A673 (cell line): ENCODE measurements at regions of chr4 and their contacts with region 1.

Region 1: DNA sequence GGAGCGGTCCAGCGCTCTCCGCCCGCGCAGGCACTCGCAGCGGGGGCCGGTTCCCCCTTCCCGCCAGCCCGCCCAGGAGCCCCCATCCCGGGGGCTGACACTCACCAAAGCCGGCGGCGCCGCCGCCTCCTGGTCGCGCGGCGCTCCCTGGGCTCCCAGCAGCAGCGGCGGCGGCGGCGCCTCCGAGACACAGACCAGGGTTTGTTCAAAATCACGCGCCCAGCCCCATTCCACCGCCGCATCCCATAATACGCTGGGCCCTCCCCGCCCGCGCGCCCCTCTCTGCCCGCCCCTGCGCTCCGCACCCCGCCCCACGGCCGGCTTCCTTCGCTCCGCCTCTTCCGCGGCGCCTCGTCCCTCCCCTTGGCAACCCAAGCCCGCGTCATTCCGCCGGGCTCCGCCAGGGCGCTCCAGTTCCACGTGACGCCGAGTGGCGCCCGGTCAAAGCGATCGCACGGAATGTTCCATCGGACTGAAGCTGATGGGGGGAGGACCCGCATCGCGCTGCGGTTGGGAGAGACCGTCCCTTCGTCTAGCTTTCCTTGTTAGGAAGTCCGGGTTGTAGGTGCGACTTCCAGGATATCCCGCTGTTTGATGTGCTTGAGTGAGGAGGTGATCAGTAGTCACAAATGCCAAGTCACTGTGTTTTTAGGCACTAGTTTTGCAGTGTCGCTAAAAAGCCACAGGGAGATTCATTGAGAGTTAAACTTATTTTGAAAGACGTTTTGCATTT is 2.2 kb upstream of the LIN54 start:
- DNase-seq: peak; percentile 94
- H3K4me3 ChIP-seq: peak overlapping the region; percentile 71
- H3K27ac ChIP-seq: peak overlapping the region; percentile 77
- H3K4me1 ChIP-seq: no peaks in the 10 kb centered on the region
- H3K27me3 ChIP-seq: no peaks in the 10 kb centered on the region
- CTCF ChIP-seq: peak; percentile 45; the same call in 1 of the 2 replicates

Region 2: DNA sequence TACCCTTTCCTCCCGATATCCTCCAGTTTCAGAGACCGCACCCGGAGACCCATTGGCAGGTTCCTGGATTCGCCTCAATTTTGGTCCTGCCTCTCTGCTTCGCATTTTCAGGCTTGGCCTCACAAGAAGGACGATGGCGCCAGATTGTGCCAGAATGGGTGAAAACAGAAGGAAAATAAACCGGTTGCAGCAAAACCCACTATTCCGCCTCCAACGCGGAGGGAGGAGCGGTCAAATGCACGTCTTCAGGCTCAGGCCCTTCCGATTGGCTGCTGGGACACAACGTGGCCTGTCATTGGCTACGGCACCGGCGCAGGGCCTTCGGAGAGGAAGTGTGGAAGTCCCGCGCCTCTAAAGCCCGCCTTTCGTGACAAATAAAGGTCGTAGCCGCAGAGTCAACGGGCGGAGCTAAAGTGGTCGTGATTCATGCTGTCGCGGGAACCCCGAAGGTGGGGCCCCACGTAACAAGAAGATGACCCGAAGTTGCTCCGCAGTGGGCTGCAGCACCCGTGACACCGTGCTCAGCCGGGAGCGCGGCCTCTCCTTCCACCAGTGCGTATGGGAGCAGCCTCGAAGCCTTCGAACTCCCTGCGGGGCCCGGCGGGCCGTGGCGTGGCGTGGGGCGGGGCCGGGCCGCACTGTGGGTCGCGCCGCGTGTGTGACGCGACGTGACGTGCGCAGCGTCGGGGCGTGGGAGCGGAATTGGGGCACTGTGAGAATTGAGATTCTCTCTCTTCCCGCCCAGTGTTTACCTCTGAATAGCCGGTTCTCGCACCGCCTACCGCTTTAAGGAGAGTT is 112.3 kb before region 1 on chr4 and contains the start of gene THAP9:
- CTCF ChIA-PET with region 1: interaction called, 9 read pairs
- POLR2A ChIA-PET with region 1: no interaction called
- intact Hi-C with region 1: loop called (anchors 2 kb)
- DNase-seq: peak; percentile 97
- H3K4me3 ChIP-seq: peak within 1 kb of the TSS; percentile 76
- H3K27ac ChIP-seq: peak within 1 kb of the TSS; percentile 98
- H3K4me1 ChIP-seq: no peaks in the 10 kb centered on the region
- H3K27me3 ChIP-seq: no peaks in the 10 kb centered on the region
- CTCF ChIP-seq: no peak
- total RNA-seq, gene THAP9: 3.8 and 4.2 TPM in 2 replicates

Region 3: GRCh38 chr4:83022724-83023450 is 10.0 kb after region 1 on chr4:
- CTCF ChIA-PET with region 1: no interaction called
- POLR2A ChIA-PET with region 1: no interaction called
- intact Hi-C with region 1: no loop called
- DNase-seq: no peak
- H3K4me3 ChIP-seq: no peak overlapping the region
- H3K27ac ChIP-seq: no peak overlapping the region
- H3K4me1 ChIP-seq: no peaks in the 10 kb centered on the region
- H3K27me3 ChIP-seq: no peaks in the 10 kb centered on the region
- CTCF ChIP-seq: no peak

Region 4: DNA sequence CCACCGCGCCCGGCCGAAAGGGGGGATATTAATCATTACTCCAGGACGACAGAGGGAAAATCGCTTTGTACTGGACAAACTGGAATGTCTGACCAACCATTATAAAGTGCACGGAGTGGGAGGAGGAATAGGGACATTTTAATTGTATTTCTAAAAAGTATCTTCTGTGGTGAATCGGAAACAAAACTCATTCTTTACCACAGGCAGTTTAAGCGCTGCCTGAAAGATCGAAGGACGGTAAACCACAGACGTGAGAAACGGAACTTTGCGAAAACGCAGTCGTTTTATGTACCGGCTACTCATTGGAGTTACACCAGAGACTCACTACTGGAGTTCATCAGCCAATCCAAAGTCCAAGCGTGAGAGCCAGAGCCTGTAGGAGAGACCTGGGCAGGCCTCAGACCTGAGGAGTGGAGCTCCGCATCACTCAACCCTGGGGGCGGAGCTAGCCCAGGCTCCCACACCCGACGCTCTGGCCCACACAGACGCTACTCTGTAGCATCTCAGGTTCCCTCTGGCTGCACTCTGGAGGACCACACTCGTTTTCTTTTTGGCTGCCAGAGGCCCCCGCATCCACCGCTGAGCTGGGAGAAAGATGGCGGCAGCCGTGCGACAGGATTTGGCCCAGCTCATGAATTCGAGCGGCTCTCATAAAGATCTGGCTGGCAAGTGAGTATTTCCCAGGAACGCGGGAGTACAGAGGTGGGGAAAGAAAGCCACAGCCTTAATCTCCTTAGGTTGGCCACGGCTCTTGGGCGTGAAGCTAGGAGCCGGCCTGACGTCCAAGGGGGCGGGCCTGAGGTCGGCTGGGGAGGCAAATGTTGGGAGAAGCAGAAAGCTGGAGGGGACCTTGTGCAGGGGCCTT is 22.0 kb after region 1 on chr4 and contains the start of gene COPS4:
- CTCF ChIA-PET with region 1: interaction called, 4 read pairs
- POLR2A ChIA-PET with region 1: no interaction called
- intact Hi-C with region 1: loop called (anchors 2 kb)
- DNase-seq: peak; percentile 98
- H3K4me3 ChIP-seq: peak within 1 kb of the TSS; percentile 77
- H3K27ac ChIP-seq: peak within 1 kb of the TSS; percentile 87
- H3K4me1 ChIP-seq: no peaks in the 10 kb centered on the region
- H3K27me3 ChIP-seq: no peaks in the 10 kb centered on the region
- CTCF ChIP-seq: no peak
- total RNA-seq, gene COPS4: 25.5 and 27.2 TPM in 2 replicates